CD8-positive, alpha-beta T cell (primary cell): ENCODE measurements at regions of chr7 and their contacts with region 1.

Region 1: DNA sequence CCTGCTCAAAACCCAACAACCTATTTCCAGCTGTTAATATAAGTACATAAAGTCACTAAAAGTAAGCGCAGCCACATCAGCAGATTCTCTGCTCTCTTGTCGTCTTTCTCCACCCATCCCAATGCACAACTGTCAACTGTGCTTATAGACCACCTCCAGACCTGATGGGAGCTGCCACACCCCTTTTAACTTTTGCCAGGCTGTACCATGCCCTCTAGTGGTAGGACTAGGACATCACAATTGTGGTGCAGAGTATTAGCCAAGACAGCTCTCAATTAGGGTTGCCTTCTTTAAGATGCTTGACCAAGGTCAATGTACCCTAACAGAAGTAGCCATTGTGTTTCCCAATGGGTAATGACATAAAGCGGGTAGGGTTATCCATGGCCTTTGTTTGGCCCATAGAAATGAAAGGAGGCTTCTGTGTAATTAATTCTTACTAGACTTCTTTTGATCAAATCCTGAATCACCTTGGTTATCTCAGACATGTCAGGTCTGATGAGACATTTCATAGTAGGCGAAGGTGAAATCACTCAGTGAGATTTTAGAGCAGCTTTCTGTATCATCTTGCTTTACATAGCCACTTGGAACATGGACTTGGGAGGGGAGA is 68.1 kb downstream of the SCRN1 start:
- DNase-seq: peak in 8 of 9 experiments; percentile 6 to 67 (median 40)
- ATAC-seq: peak; percentile 92
- H3K4me3 ChIP-seq: no peak overlapping the region
- H3K4me3 Mint-ChIP-seq: no peak overlapping the region
- H3K27ac ChIP-seq: no peak overlapping the region
- H3K27ac Mint-ChIP-seq: no peak overlapping the region
- H3K4me1 ChIP-seq: no peaks in the 10 kb centered on the region
- H3K4me1 Mint-ChIP-seq: no peaks in the 10 kb centered on the region
- H3K27me3 ChIP-seq: peaks cover 0 to 2% of the 10 kb centered on the region in 2 experiments
- H3K27me3 Mint-ChIP-seq: no peaks in the 10 kb centered on the region
- CTCF ChIP-seq: peak; percentile 90

Region 2: GRCh38 chr7:29281782-29282541 is 639.5 kb before region 1 on chr7:
- CTCF ChIA-PET with region 1: no interaction called
- POLR2A ChIA-PET with region 1: no interaction called
- intact Hi-C with region 1: no loop called
- DNase-seq: no peak
- ATAC-seq: no peak
- H3K4me3 ChIP-seq: no peak overlapping the region
- H3K4me3 Mint-ChIP-seq: no peak overlapping the region
- H3K27ac ChIP-seq: no peak overlapping the region
- H3K27ac Mint-ChIP-seq: no peak overlapping the region
- H3K4me1 ChIP-seq: peaks cover 11% of the 10 kb centered on the region
- H3K4me1 Mint-ChIP-seq: peaks cover 30% of the 10 kb centered on the region
- H3K27me3 ChIP-seq: no peaks in the 10 kb centered on the region
- H3K27me3 Mint-ChIP-seq: no peaks in the 10 kb centered on the region
- CTCF ChIP-seq: no peak

Region 3: DNA sequence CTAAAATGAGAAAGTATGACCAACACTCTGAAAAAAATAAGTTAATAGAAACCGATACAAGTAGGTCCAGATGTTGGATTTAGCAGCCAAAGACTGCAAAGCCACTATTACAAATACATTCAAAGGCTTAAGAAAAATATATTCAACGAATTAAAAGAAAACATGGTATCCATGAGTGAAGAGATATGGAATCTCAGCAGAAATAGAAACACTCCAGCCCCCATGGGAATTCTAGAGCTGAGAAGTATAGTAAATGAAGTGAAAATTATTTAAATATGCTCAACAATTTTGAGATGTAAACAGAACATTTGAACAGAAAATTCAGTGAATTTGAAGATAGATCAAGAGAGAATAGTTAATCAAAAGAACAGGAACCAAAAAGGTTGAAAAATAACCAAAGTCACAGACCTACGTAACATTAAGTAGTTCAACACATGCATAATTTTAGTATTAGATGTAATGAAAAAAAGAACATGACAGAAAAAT is 187.2 kb before region 1 on chr7:
- CTCF ChIA-PET with region 1: no interaction called
- POLR2A ChIA-PET with region 1: no interaction called
- intact Hi-C with region 1: no loop called
- DNase-seq: no peak
- ATAC-seq: no peak
- H3K4me3 ChIP-seq: no peak overlapping the region
- H3K4me3 Mint-ChIP-seq: no peak overlapping the region
- H3K27ac ChIP-seq: no peak overlapping the region
- H3K27ac Mint-ChIP-seq: no peak overlapping the region
- H3K4me1 ChIP-seq: no peaks in the 10 kb centered on the region
- H3K4me1 Mint-ChIP-seq: no peaks in the 10 kb centered on the region
- H3K27me3 ChIP-seq: no peaks in the 10 kb centered on the region
- H3K27me3 Mint-ChIP-seq: peaks cover 13% of the 10 kb centered on the region
- CTCF ChIP-seq: no peak

Region 4: DNA sequence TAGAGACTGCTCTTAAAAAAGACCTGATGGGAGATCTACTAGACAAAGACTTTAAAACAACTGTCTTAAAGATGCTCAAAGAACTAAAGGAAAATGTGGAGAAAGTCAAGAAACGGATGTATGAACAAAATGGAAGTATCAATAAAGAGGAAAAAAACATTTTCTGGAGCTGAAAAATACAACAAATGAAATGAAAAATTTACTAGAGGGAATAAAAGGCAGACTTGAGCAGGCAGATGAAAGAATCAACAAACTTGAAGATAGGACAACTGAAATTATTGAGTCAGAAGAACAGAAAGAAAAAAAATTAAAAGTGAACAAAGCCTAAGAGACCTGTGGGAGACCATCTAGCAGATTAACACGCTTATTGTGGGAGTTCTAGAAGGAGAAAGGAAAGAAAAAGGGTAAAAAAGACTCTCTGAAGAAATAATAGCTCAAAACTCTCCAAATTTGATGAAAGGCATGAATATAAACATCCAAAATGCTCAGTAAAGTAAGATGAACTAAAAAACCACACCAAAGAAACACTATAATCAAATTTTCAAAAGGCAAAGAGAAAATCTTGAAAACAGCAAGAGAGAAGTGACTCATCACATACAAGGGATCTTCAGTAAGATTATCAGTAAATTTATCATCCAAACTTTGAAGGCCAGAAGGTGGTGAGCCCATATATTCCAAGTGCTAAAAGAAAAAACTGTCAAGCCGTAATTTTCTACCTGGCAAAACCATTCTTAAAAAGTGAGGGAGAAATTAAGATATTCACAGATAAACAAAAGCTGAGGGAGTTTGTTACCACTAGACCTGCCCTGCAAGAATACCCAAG is 15.1 kb before region 1 on chr7:
- CTCF ChIA-PET with region 1: interaction called, 21 read pairs
- POLR2A ChIA-PET with region 1: no interaction called
- intact Hi-C with region 1: no loop called
- DNase-seq: no peak
- ATAC-seq: no peak
- H3K4me3 ChIP-seq: no peak overlapping the region
- H3K4me3 Mint-ChIP-seq: no peak overlapping the region
- H3K27ac ChIP-seq: no peak overlapping the region
- H3K27ac Mint-ChIP-seq: no peak overlapping the region
- H3K4me1 ChIP-seq: no peaks in the 10 kb centered on the region
- H3K4me1 Mint-ChIP-seq: no peaks in the 10 kb centered on the region
- H3K27me3 ChIP-seq: no peaks in the 10 kb centered on the region
- H3K27me3 Mint-ChIP-seq: peaks cover 2% of the 10 kb centered on the region
- CTCF ChIP-seq: no peak